Panc1 (cell line): ENCODE measurements at regions of chr15 and their contacts with region 1.

Region 1: DNA sequence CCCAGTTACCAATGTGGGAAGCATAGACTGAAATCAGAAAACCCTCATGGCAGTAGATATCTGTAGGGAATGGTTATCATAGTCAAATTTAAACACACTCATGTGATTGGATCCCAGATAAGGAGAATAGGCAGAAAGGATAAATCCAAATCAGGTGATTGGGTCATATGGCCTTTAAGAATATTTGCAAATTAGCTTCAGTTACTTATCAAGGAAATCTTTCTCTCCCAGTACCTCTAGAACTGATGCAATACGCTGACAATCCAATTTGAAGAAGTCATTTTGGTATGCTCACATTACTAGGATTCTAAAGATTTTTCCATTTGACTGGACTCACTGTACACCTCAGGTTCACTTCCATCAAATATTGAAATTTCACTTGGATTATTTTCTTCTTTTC is 87.7 kb upstream of the MNS1 start:
- DNase-seq: no peak
- ATAC-seq: no peak
- H3K4me3 ChIP-seq: no peak overlapping the region
- H3K27ac ChIP-seq: no peak overlapping the region
- H3K4me1 ChIP-seq: no peaks in the 10 kb centered on the region
- H3K27me3 ChIP-seq: no peaks in the 10 kb centered on the region
- CTCF ChIP-seq: no peak

Region 2: DNA sequence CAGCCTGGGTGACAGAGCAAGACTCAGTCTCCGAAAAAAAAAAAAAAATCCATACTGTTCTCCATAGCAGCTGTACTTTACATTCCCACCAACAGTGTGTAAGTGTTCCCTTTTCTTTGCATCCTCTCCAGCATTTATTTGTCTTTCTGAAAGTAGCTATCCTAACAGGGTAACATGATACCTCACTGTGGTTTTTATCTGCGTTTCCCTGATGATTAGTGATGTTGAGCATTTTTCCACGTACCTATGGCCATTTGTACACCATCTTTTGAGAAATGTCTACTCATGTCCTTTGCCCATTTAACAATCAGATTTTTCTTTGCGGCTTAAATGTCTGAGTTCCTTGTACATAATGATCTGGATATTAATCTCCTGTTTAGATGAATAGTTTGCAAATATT is 428.3 kb before region 1 on chr15:
- CTCF ChIA-PET with region 1: no interaction called
- POLR2A ChIA-PET with region 1: no interaction called
- in situ Hi-C with region 1: no loop called
- intact Hi-C with region 1: no loop called
- DNase-seq: no peak
- ATAC-seq: no peak
- H3K4me3 ChIP-seq: no peak overlapping the region
- H3K27ac ChIP-seq: no peak overlapping the region
- H3K4me1 ChIP-seq: no peaks in the 10 kb centered on the region
- H3K27me3 ChIP-seq: no peaks in the 10 kb centered on the region
- CTCF ChIP-seq: no peak

Region 3: GRCh38 chr15:56464893-56465520 is 87.7 kb before region 1 on chr15 and contains the start of gene MNS1:
- CTCF ChIA-PET with region 1: no interaction called
- POLR2A ChIA-PET with region 1: interaction called, 12 read pairs
- in situ Hi-C with region 1: no loop called
- intact Hi-C with region 1: no loop called
- DNase-seq: peak; percentile 95
- ATAC-seq: peak; percentile 100
- H3K4me3 ChIP-seq: peak within 1 kb of the TSS; percentile 65 to 83
- H3K27ac ChIP-seq: peak within 1 kb of the TSS; percentile 64
- H3K4me1 ChIP-seq: no peaks in the 10 kb centered on the region; the same call in 1 of the 2 replicates
- H3K27me3 ChIP-seq: no peaks in the 10 kb centered on the region
- CTCF ChIP-seq: no peak
- total RNA-seq, gene MNS1: 3.8 TPM

Region 4: DNA sequence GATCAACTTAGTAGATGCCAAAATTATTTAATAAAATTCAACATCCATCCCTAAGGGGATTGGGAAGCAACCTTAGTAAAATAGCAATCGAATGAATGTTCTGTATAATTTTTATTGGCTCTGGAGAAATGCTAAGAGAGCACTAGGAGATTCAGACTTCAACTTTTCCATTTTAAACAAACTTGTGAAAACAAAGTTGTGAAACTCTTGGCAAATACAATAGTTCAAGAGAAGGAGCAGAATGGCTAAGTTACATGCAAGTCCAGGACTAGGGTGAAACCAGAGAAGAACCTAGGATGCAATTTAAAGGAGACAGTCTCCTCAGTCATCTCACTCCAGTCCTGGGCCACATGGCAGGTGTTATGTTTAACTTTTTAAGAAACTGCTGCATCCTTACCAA is 197.3 kb after region 1 on chr15:
- CTCF ChIA-PET with region 1: no interaction called
- POLR2A ChIA-PET with region 1: interaction called, 13 read pairs
- in situ Hi-C with region 1: no loop called
- intact Hi-C with region 1: no loop called
- DNase-seq: no peak
- ATAC-seq: no peak
- H3K4me3 ChIP-seq: no peak overlapping the region
- H3K27ac ChIP-seq: no peak overlapping the region
- H3K4me1 ChIP-seq: no peaks in the 10 kb centered on the region
- H3K27me3 ChIP-seq: no peaks in the 10 kb centered on the region; the same call in 1 of the 2 replicates
- CTCF ChIP-seq: no peak